MCF 10A (cell line): ENCODE measurements at regions of chr3 and their contacts with region 1.

Region 1: GRCh38 chr3:101561630-101562328 is at the start of gene TRMT10C:
- DNase-seq: peak; percentile 93
- H3K4me3 Mint-ChIP-seq: peak within 1 kb of the TSS; percentile 90
- H3K27ac Mint-ChIP-seq: peak within 1 kb of the TSS; percentile 93
- H3K4me1 Mint-ChIP-seq: peaks cover 15% of the 10 kb centered on the region
- H3K27me3 Mint-ChIP-seq: no peaks in the 10 kb centered on the region
- CTCF ChIP-seq: no peak
- total RNA-seq, gene TRMT10C: 27.0 and 32.5 TPM in 2 replicates

Region 2: DNA sequence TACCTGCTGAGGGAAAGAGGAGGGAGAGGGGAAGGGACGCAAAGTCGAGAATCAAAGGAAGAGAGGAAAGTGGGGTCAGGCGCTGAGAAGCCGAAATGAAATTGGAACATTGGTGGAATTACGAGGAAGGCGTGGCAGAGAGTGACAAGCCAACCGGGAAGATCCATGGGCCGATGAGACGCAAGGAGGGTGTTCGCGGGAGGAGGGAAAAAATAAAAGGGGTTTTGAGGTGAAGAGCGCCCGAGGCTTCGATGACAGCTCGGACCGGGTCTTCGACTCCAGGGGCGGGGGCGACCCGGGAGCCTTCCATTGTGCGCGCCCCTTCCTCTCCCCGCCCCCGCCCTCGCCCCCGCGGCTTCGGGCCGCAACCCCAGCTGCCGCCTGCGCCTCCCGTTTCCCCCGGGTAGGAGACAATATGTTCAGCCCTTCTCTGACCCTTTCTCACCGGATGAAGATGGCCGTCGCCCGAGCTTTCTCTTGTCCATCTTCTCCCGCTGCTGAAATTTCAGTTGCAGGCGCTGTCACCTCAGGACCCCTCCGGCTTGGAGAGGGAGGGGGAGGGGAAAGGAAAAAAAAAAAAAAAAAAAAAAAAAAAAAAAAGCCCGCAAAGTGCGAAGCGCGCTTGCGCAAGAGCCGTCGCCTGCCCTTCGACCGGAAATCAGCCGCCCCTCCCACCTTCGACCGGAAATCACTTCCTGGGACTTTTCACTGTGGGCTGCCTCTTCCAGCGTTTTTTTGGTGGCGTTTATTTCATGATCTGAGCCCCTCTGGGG is 48.9 kb before region 1 on chr3 and contains the start of gene SENP7:
- CTCF ChIA-PET with region 1: no interaction called
- POLR2A ChIA-PET with region 1: interaction called, 34 read pairs
- intact Hi-C with region 1: loop called (anchors 2 kb)
- DNase-seq: peak; percentile 88
- H3K4me3 Mint-ChIP-seq: peak within 1 kb of the TSS; percentile 94
- H3K27ac Mint-ChIP-seq: peak within 1 kb of the TSS; percentile 94
- H3K4me1 Mint-ChIP-seq: peaks cover 11% of the 10 kb centered on the region
- H3K27me3 Mint-ChIP-seq: no peaks in the 10 kb centered on the region
- CTCF ChIP-seq: no peak
- total RNA-seq, gene SENP7: 11.9 and 15.0 TPM in 2 replicates

Region 3: DNA sequence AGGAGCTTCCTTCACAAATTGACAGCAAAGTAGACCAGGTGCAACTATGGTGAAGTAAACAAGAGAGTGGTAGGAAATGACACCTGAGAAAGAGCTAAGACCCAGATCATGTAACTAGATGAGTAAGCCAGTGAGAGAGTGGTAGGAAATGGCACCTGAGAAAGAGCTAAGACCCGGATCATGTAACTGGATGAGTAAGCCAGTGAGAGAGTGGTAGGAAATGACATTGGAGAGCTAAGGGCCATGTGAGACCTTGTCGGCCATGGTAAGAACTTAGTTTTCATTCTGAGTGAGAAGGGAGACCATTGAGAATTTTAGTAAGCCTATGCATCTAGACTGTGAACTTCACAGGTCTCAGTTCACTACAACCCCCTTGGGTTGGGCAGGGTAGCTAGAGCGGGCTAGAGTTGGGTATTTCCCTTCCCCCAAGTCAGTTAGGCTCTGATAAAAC is 43.3 kb before region 1 on chr3:
- CTCF ChIA-PET with region 1: no interaction called
- POLR2A ChIA-PET with region 1: interaction called, 34 read pairs
- intact Hi-C with region 1: loop called (anchors 2 kb)
- DNase-seq: peak; percentile 59
- H3K4me3 Mint-ChIP-seq: no peak overlapping the region
- H3K27ac Mint-ChIP-seq: no peak overlapping the region
- H3K4me1 Mint-ChIP-seq: peaks cover 10% of the 10 kb centered on the region
- H3K27me3 Mint-ChIP-seq: no peaks in the 10 kb centered on the region
- CTCF ChIP-seq: no peak

Region 4: GRCh38 chr3:101849051-101849720 is 287.4 kb after region 1 on chr3 and contains the start of gene NFKBIZ:
- CTCF ChIA-PET with region 1: no interaction called
- POLR2A ChIA-PET with region 1: no interaction called
- intact Hi-C with region 1: no loop called
- DNase-seq: peak; percentile 93
- H3K4me3 Mint-ChIP-seq: peak within 1 kb of the TSS; percentile 94
- H3K27ac Mint-ChIP-seq: peak within 1 kb of the TSS; percentile 99
- H3K4me1 Mint-ChIP-seq: peaks cover 35% of the 10 kb centered on the region
- H3K27me3 Mint-ChIP-seq: no peaks in the 10 kb centered on the region
- CTCF ChIP-seq: no peak
- total RNA-seq, gene NFKBIZ: 48.9 and 58.8 TPM in 2 replicates

Region 5: DNA sequence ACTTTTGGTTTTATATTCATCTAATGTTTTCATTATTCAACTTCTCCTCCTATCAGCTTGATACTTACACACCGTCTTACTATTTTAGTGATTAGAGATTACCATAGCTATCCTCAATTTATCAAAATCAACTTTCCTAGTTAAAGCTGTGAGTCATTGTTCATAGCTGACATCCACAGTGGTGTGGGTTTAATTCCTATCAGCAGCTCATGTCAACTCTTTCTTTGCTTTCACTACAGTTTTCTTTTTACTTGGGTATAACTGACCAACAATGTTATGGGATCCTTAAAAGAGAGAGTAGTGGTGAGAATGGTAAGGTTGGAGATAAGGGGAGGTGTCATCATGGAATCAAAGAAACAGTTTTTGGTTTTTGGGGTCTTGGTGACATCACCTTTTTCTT is 400.3 kb after region 1 on chr3:
- CTCF ChIA-PET with region 1: no interaction called
- POLR2A ChIA-PET with region 1: no interaction called
- intact Hi-C with region 1: no loop called
- DNase-seq: no peak
- H3K4me3 Mint-ChIP-seq: no peak overlapping the region
- H3K27ac Mint-ChIP-seq: no peak overlapping the region
- H3K4me1 Mint-ChIP-seq: peaks cover 18% of the 10 kb centered on the region
- H3K27me3 Mint-ChIP-seq: no peaks in the 10 kb centered on the region
- CTCF ChIP-seq: no peak